ENCODE measurements at regions of chr19 and their contacts with region 1.

Region 1: DNA sequence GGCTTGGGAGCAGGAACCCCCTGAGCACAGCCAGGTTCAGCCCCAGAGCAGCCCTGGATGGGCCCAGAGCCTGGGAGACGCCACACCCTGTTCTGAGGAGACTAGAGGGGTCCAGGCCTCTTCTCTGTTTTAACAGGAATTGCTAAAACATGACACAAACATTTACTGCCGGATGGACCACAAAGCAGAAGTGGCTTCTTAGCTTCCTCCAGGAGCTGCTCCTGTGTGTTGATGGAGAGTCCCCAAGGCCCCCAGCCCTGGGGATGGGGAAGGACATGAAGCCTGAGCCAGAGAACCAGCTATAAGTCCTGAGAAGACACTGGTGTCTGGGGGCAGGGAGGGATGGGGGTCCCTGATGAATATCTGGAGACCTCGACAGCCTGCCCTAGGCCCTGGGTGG is 14.6 kb downstream of the CEACAM3 start:
- DNase-seq: no peak
- H3K4me3 ChIP-seq: no peak overlapping the region
- H3K27ac ChIP-seq: no peak overlapping the region
- H3K4me1 ChIP-seq: no peaks in the 10 kb centered on the region
- H3K27me3 ChIP-seq: no peaks in the 10 kb centered on the region
- CTCF ChIP-seq: no peak

Region 2: GRCh38 chr19:41597600-41598041 is 213.4 kb before region 1 on chr19:
- CTCF ChIA-PET with region 1: no interaction called
- dilution Hi-C with region 1: no loop called
- in situ Hi-C with region 1: no loop called
- intact Hi-C with region 1: no loop called
- DNase-seq: peak; percentile 41
- H3K4me3 ChIP-seq: no peak overlapping the region
- H3K27ac ChIP-seq: no peak overlapping the region
- H3K4me1 ChIP-seq: no peaks in the 10 kb centered on the region
- H3K27me3 ChIP-seq: no peaks in the 10 kb centered on the region
- CTCF ChIP-seq: peak; percentile 94 to 97

Region 3: GRCh38 chr19:41706741-41707501 is 104.1 kb before region 1 on chr19:
- CTCF ChIA-PET with region 1: no interaction called
- dilution Hi-C with region 1: no loop called
- in situ Hi-C with region 1: no loop called
- intact Hi-C with region 1: loop called (anchors 5 kb)
- DNase-seq: peak; percentile 51
- H3K4me3 ChIP-seq: peak overlapping the region in 2 of 3 experiments; percentile 23 to 33
- H3K27ac ChIP-seq: no peak overlapping the region
- H3K4me1 ChIP-seq: peaks cover 4% of the 10 kb centered on the region
- H3K27me3 ChIP-seq: no peaks in the 10 kb centered on the region
- CTCF ChIP-seq: peak; percentile 71 to 78